B cell (primary cell): ENCODE measurements at regions of chr12 and their contacts with region 1.

Region 1: GRCh38 chr12:104381731-104382480 is 74.8 kb upstream of the CHST11 start:
- DNase-seq: peak; percentile 90
- ATAC-seq: peak; percentile 90
- H3K4me3 ChIP-seq: no peak overlapping the region
- H3K4me3 Mint-ChIP-seq: no peak overlapping the region
- H3K27ac ChIP-seq: no peak overlapping the region
- H3K27ac Mint-ChIP-seq: peak overlapping the region; percentile 1
- H3K4me1 ChIP-seq: peaks cover 3 to 9% of the 10 kb centered on the region in 2 donors
- H3K4me1 Mint-ChIP-seq: peaks cover 9% of the 10 kb centered on the region
- H3K27me3 ChIP-seq: peaks cover 0 to 4% (median 2%) of the 10 kb centered on the region in 4 experiments
- H3K27me3 Mint-ChIP-seq: peaks cover 6% of the 10 kb centered on the region
- CTCF ChIP-seq: peak; percentile 95

Region 2: GRCh38 chr12:104329707-104330532 is 52.0 kb before region 1 on chr12:
- CTCF ChIA-PET with region 1: no interaction called
- POLR2A ChIA-PET with region 1: no interaction called
- intact Hi-C with region 1: no loop called
- DNase-seq: no peak
- ATAC-seq: no peak
- H3K4me3 ChIP-seq: no peak overlapping the region
- H3K4me3 Mint-ChIP-seq: no peak overlapping the region
- H3K27ac ChIP-seq: no peak overlapping the region
- H3K27ac Mint-ChIP-seq: no peak overlapping the region
- H3K4me1 ChIP-seq: no peaks in the 10 kb centered on the region
- H3K4me1 Mint-ChIP-seq: no peaks in the 10 kb centered on the region
- H3K27me3 ChIP-seq: no peaks in the 10 kb centered on the region
- H3K27me3 Mint-ChIP-seq: no peaks in the 10 kb centered on the region
- CTCF ChIP-seq: no peak

Region 3: DNA sequence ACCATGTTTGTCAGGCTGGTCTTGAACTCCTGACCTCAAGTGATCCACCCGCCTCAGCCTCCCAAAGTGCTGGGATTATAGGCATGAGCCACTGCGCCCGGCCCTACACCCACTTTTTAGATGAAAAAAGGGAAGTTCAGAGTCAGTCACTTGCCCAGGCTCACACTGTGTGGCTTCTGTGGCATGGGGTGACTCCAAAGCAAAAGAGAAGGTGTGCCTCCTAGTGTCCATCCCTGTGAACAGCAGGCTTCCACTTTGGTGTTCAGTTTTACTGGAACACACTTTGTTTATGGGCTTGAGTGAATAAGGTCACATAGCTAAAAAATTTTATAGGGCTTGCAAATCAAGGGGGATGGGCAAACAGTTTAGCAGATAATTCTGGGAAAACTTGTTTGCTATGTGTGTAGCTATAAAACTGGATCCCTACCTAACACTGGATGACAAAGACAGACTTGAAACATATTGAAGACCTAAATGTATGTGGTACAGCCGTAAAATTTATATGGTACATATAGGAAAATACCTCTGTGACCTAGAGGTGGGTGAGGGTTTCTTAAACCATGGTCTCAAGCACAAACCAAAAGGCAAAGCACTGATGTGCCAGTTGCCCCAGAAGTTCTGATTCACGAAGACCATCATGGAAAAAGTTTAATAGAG is 23.4 kb before region 1 on chr12:
- CTCF ChIA-PET with region 1: interaction called, 14 read pairs
- POLR2A ChIA-PET with region 1: no interaction called
- intact Hi-C with region 1: no loop called
- DNase-seq: peak; percentile 82
- ATAC-seq: peak; percentile 97
- H3K4me3 ChIP-seq: no peak overlapping the region
- H3K4me3 Mint-ChIP-seq: no peak overlapping the region
- H3K27ac ChIP-seq: no peak overlapping the region
- H3K27ac Mint-ChIP-seq: no peak overlapping the region
- H3K4me1 ChIP-seq: no peaks in the 10 kb centered on the region
- H3K4me1 Mint-ChIP-seq: no peaks in the 10 kb centered on the region
- H3K27me3 ChIP-seq: no peaks in the 10 kb centered on the region
- H3K27me3 Mint-ChIP-seq: no peaks in the 10 kb centered on the region
- CTCF ChIP-seq: peak; percentile 76

Region 4: DNA sequence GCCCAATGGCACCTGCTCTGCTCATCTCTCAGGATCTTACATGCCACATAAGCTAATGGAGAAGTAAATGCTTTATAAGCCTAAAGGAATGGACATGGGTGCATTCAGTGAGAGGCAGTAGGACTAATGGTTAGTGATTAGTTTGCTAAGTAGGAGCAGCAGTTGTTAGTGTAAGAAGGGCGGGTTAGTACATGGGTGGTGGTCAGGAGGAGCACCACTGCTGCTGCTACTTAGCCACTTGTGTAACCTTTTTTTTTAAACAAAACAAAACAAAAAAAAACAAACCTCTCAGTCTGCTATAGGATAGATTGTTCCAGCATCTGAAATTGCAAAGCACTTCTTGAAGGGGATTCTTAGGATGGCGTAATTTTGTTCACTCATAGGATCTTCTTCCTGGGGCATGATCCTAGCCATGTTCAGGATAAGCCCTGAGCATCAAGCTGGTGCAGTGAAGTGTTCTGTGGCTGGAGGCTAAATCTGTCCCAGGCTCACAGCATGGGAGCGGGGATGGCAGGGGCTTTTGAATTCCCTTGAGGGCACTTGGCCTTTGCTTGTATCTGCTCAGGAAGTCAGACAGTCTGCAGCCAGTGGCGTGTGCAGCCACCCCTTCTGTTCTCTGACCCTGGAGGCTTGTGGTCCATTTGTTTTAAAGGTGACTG is 138.5 kb after region 1 on chr12:
- CTCF ChIA-PET with region 1: interaction called, 10 read pairs
- POLR2A ChIA-PET with region 1: no interaction called
- intact Hi-C with region 1: no loop called
- DNase-seq: peak; percentile 80
- ATAC-seq: peak; percentile 80
- H3K4me3 ChIP-seq: peak overlapping the region in 3 of 5 experiments; percentile 5 to 40 (median 12)
- H3K4me3 Mint-ChIP-seq: peak overlapping the region; percentile 62
- H3K27ac ChIP-seq: peak overlapping the region; percentile 8 to 64
- H3K27ac Mint-ChIP-seq: peak overlapping the region; percentile 85
- H3K4me1 ChIP-seq: peaks cover 75% of the 10 kb centered on the region in 2 donors
- H3K4me1 Mint-ChIP-seq: peaks cover 92% of the 10 kb centered on the region
- H3K27me3 ChIP-seq: no peaks in the 10 kb centered on the region
- H3K27me3 Mint-ChIP-seq: no peaks in the 10 kb centered on the region
- CTCF ChIP-seq: no peak

Region 5: DNA sequence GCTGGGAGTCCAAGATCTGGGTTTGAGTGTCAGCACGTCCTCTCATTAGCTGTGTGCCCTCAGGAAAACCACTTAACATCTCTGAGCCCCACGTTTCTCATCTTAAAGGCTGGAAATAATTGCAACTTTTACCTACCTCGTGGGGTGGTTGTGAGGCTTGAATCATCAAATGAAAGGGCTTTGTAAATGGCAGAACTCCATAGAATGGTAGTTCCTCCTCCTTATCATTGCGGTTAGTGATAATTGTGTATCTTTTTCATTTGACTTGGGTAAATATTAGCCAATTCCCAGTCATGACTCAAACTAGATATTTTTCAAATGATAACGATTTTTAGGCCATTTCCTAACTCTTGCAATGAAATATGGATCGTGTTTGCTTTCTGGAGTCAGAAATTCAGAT is 280.3 kb after region 1 on chr12:
- CTCF ChIA-PET with region 1: interaction called, 10 read pairs
- POLR2A ChIA-PET with region 1: no interaction called
- intact Hi-C with region 1: no loop called
- DNase-seq: no peak
- ATAC-seq: no peak
- H3K4me3 ChIP-seq: no peak overlapping the region
- H3K4me3 Mint-ChIP-seq: no peak overlapping the region
- H3K27ac ChIP-seq: no peak overlapping the region
- H3K27ac Mint-ChIP-seq: no peak overlapping the region
- H3K4me1 ChIP-seq: no peaks in the 10 kb centered on the region
- H3K4me1 Mint-ChIP-seq: peaks cover 25% of the 10 kb centered on the region
- H3K27me3 ChIP-seq: no peaks in the 10 kb centered on the region
- H3K27me3 Mint-ChIP-seq: no peaks in the 10 kb centered on the region
- CTCF ChIP-seq: no peak

Region 6: GRCh38 chr12:104740668-104741067 is 358.8 kb after region 1 on chr12:
- CTCF ChIA-PET with region 1: interaction called, 4 read pairs
- POLR2A ChIA-PET with region 1: no interaction called
- intact Hi-C with region 1: loop called (anchors 5 kb)
- DNase-seq: peak; percentile 83
- ATAC-seq: peak; percentile 87
- H3K4me3 ChIP-seq: peak overlapping the region in 3 of 5 experiments; percentile 22 to 34 (median 33)
- H3K4me3 Mint-ChIP-seq: peak overlapping the region; percentile 74
- H3K27ac ChIP-seq: peak overlapping the region; percentile 66 to 83
- H3K27ac Mint-ChIP-seq: peak overlapping the region; percentile 93
- H3K4me1 ChIP-seq: peaks cover 77 to 88% of the 10 kb centered on the region in 2 donors
- H3K4me1 Mint-ChIP-seq: peaks cover 94% of the 10 kb centered on the region
- H3K27me3 ChIP-seq: no peaks in the 10 kb centered on the region
- H3K27me3 Mint-ChIP-seq: no peaks in the 10 kb centered on the region
- CTCF ChIP-seq: no peak

Region 7: DNA sequence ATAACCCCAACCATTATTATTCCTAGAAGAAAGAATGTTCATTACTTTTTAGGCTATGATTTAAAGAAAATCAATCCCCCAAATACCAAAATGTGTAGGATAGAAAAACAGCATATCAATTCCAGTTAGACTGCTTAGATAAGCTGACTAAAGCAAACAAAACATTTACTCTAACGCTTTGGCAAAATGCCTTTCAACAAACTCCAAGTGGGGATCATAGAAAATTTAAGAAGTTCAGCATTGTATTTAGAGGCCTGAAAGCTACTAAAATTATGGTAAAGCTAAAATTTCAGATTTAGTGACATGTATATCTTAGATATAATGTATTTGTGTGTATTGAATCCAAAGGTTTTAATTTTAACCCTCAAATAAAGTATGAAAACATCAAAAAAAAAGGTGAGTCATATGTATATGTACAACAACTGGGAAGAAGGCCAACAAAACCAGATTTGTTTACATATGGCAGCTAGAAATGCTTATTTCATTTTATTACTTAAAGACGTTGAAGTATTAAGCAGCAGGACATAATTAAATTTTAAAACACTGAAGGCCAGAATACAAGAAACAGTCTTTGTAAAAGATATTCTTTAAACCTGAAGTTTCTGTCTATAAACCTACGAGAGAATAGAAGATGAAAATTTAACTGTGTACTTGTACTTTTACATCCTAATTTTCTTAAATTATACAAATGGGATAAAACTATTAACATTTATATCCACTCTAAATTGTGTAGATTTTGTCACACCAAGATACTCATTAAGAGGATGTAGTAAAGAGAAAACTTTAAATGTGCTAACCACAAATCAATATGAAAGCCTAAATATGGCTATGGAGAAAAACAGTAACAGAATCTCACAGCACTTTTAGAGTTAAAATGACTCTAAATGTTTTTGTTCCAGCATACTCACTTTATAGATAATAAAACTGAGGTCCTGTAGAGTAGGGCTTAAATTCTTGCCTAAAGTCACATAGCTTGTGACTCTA is 504.8 kb after region 1 on chr12:
- CTCF ChIA-PET with region 1: interaction called, 11 read pairs
- POLR2A ChIA-PET with region 1: no interaction called
- intact Hi-C with region 1: no loop called
- DNase-seq: no peak
- ATAC-seq: no peak
- H3K4me3 ChIP-seq: no peak overlapping the region
- H3K4me3 Mint-ChIP-seq: no peak overlapping the region
- H3K27ac ChIP-seq: no peak overlapping the region
- H3K27ac Mint-ChIP-seq: no peak overlapping the region
- H3K4me1 ChIP-seq: no peaks in the 10 kb centered on the region
- H3K4me1 Mint-ChIP-seq: peaks cover 11% of the 10 kb centered on the region
- H3K27me3 ChIP-seq: no peaks in the 10 kb centered on the region
- H3K27me3 Mint-ChIP-seq: no peaks in the 10 kb centered on the region
- CTCF ChIP-seq: no peak